SK-N-SH (cell line): ENCODE measurements at regions of chr17 and their contacts with region 1.

Region 1: DNA sequence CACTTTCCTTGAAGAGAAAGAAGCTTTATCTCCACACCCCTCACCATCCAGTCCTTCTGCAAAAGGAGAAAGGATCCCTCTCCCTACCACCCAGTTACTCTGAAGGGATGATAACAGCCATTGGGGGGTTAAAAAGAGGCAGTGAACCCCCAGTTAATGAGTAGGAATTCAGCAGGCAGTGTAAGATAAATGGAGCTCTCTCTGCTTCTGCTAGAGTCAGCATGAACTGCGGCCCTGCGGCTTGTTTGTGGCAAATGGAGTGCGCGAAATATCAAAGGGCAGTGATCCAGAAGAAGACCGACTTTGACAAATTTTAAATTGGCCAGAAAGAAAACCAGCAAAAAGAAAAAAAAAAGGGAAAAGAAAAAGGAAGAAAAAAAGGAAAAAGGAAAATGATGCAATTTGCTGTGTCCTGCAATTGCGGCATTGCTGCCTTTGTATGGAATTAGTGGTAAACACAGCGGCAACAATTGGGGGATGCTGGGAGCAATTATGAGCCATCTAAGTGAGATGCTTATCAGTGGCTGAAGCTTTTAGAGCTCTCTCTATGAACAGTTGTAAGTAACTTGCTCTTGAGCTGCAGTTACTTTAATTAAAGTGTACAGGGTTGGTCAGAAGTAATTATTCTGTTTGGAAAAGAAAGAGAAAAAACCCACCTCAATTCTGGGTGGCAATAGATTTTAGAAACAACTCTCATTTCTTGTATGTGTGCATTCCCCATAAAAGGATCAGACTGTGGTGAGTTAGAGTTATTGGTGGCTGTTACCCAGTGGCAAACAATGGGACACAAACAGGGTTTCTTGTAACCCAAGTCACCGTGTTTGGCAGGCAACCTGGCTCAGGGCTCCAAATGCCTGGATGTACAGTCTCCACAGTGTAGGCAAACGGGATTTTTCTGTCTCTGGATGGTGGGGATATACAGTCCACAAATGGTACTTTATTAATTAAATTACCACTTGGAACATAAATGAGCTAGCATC is 161.3 kb downstream of the AATF start:
- DNase-seq: peak; percentile 70
- H3K4me3 ChIP-seq: no peak overlapping the region
- H3K27ac ChIP-seq: peak overlapping the region in 1 of 2 experiments; percentile 98; a peak in 2 of 4 replicates
- H3K4me1 ChIP-seq: peaks cover 0 to 53% of the 10 kb centered on the region in 2 experiments; a peak in 2 of 4 replicates
- H3K27me3 ChIP-seq: no peaks in the 10 kb centered on the region
- CTCF ChIP-seq: no peak
- EP300 ChIP-seq: peak in 1 of 2 experiments; percentile 68; a peak in 1 of 4 replicates
- RAD21 ChIP-seq: peak; percentile 16; the same call in 1 of the 2 replicates

Region 2: DNA sequence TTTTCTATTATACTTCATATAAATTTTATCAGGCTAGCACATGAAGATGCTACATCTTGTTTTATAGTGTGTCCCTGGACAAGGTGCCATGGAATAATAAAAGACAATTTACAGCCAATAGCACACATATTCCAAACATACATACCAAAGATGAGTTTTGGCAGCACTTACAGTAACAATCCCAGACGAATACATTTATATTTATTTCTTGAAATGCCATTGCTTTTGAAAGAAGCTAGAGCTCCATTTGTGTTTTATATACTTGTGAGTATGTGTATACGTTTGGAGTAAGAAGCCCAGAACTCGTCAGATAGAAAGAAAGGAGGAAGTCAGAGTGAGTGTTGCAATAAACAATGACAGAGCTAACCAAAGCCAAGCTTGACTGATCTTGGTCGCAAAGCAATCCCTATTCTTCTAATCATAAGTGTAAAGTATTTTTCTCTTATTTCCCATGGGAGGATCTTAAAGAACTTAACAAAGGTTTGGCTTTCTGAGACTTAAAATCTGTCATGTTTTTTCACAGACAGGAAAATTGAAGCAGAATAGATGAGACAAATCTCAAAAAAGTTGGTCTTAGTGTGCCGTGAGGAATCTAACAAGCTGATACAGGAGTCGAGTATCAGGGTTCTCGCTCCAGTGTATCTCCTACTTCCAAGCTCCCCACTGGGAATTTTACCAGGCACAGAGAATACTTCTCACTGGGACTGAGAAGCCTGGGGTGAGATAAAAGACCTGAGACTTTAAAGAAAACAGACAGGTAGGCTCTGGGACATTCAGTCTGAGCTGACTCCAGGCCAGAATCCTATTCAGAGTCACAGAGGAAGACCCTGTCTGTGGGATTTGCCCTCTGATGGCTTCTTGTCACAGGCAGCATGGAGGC is 14.2 kb after region 1 on chr17:
- CTCF ChIA-PET with region 1: interaction called, 10 read pairs
- POLR2A ChIA-PET with region 1: no interaction called
- DNase-seq: no peak
- H3K4me3 ChIP-seq: no peak overlapping the region
- H3K27ac ChIP-seq: peak overlapping the region in 1 of 2 experiments; percentile 34; a peak in 1 of 4 replicates
- H3K4me1 ChIP-seq: peaks cover 0 to 11% of the 10 kb centered on the region in 2 experiments; a peak in 2 of 4 replicates
- H3K27me3 ChIP-seq: no peaks in the 10 kb centered on the region
- CTCF ChIP-seq: no peak
- EP300 ChIP-seq: no peak
- RAD21 ChIP-seq: no peak

Region 3: GRCh38 chr17:37247825-37248224 is 137.8 kb after region 1 on chr17:
- CTCF ChIA-PET with region 1: no interaction called
- POLR2A ChIA-PET with region 1: no interaction called
- DNase-seq: no peak
- H3K4me3 ChIP-seq: no peak overlapping the region
- H3K27ac ChIP-seq: no peak overlapping the region
- H3K4me1 ChIP-seq: no peaks in the 10 kb centered on the region; a peak in 1 of 4 replicates
- H3K27me3 ChIP-seq: no peaks in the 10 kb centered on the region
- CTCF ChIP-seq: no peak
- EP300 ChIP-seq: no peak
- RAD21 ChIP-seq: no peak

Region 4: GRCh38 chr17:37476431-37477120 is 366.6 kb after region 1 on chr17:
- CTCF ChIA-PET with region 1: no interaction called
- POLR2A ChIA-PET with region 1: no interaction called
- DNase-seq: no peak
- H3K4me3 ChIP-seq: no peak overlapping the region
- H3K27ac ChIP-seq: peak overlapping the region in 1 of 2 experiments; percentile 41; a peak in 2 of 4 replicates
- H3K4me1 ChIP-seq: peaks cover 3 to 7% of the 10 kb centered on the region in 2 experiments; a peak in 2 of 4 replicates
- H3K27me3 ChIP-seq: no peaks in the 10 kb centered on the region
- CTCF ChIP-seq: no peak
- EP300 ChIP-seq: no peak
- RAD21 ChIP-seq: no peak